ENCODE measurements at regions of chr14 and their contacts with region 1.

Region 1: GRCh38 chr14:68939893-68940613 is 39.0 kb downstream of the ACTN1 start:
- DNase-seq: peak; percentile 94
- H3K4me3 Mint-ChIP-seq: no peak overlapping the region
- H3K27ac Mint-ChIP-seq: peak overlapping the region; percentile 88
- H3K4me1 Mint-ChIP-seq: peaks cover 59% of the 10 kb centered on the region
- H3K27me3 Mint-ChIP-seq: no peaks in the 10 kb centered on the region
- CTCF ChIP-seq: no peak

Region 2: GRCh38 chr14:68926236-68926635 is 13.8 kb before region 1 on chr14:
- CTCF ChIA-PET with region 1: interaction called, 17 read pairs
- POLR2A ChIA-PET with region 1: interaction called, 7 read pairs
- intact Hi-C with region 1: no loop called
- DNase-seq: no peak
- H3K4me3 Mint-ChIP-seq: no peak overlapping the region
- H3K27ac Mint-ChIP-seq: peak overlapping the region; percentile 65
- H3K4me1 Mint-ChIP-seq: peaks cover 18% of the 10 kb centered on the region
- H3K27me3 Mint-ChIP-seq: no peaks in the 10 kb centered on the region
- CTCF ChIP-seq: peak; percentile 19

Region 3: DNA sequence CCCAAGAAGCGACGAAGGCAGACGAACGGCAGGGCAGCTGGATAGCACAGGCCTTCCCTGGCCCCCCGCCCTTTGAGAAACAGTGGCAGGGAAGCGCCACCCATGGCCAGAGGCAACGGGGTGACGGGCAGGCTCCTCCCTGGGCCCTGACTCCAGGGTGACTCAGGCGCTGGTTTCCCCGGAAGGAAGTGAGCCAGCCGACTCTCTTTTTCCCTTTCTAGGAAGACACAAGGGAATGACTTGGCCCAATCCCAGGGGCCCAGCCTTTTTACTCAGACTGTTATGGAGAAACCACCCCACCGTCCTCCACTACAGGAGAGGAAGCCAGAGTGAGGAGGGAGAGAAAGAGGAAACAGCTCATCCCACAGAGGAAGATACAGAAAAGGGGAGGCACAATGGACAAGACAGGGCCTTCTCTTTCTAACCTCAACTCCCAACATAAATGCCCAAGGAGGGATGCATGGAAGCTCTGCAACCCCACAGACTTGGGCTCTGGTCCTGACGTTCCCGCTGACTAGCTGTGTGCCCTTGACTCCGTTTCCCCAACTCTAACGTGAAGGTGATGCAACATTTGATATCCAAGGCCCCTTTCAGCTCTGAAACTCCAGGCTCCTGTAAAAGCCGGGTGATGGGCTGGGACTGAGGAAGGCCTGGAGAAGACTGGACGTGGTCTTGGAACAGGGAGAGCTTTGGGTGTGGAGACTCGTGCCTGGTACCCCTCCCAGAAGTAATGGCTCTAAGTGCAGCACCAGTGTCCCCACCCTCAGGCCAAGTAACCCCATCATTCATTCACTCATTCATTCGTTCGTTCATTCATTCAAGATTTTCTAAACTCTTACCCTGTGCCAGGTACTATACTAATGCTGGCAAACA is 11.2 kb after region 1 on chr14:
- CTCF ChIA-PET with region 1: interaction called, 7 read pairs
- POLR2A ChIA-PET with region 1: interaction called, 24 read pairs
- intact Hi-C with region 1: loop called (anchors 1 kb)
- DNase-seq: peak; percentile 100
- H3K4me3 Mint-ChIP-seq: peak overlapping the region; percentile 56
- H3K27ac Mint-ChIP-seq: peak overlapping the region; percentile 95
- H3K4me1 Mint-ChIP-seq: peaks cover 75% of the 10 kb centered on the region
- H3K27me3 Mint-ChIP-seq: no peaks in the 10 kb centered on the region
- CTCF ChIP-seq: no peak